Keratinocyte (primary cell): ENCODE measurements at regions of chr1 and their contacts with region 1.

Region 1: DNA sequence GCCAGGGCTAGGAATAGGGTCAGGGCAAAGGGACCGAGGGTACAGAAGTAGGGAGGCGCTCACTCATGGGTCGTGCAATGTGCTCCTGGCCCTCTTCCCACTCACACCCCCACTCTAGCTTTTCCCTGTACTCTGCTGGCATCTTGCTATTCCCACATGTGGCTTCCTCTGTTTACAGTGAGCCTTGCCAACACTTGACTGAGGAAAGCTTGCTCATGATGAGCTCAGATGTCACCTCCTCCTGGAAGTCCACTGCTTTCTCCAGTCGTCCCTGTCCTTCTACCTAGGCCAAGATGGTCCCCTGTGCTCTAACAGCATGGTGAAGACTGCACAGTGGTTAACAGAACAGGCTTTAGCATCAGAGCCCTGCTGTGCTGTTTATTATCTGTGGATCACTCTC is 8.0 kb upstream of the RIMS3 start:
- DNase-seq: no peak
- H3K4me3 ChIP-seq: no peak overlapping the region
- H3K27ac ChIP-seq: no peak overlapping the region
- H3K4me1 ChIP-seq: peaks cover 2% of the 10 kb centered on the region
- H3K27me3 ChIP-seq: peaks cover 6% of the 10 kb centered on the region
- CTCF ChIP-seq: no peak

Region 2: GRCh38 chr1:40588586-40588985 is 84.9 kb before region 1 on chr1:
- dilution Hi-C with region 1: loop called (anchors 5 kb)
- DNase-seq: no peak
- H3K4me3 ChIP-seq: no peak overlapping the region
- H3K27ac ChIP-seq: no peak overlapping the region
- H3K4me1 ChIP-seq: no peaks in the 10 kb centered on the region
- H3K27me3 ChIP-seq: no peaks in the 10 kb centered on the region
- CTCF ChIP-seq: no peak